Natural killer cell (primary cell): ENCODE measurements at regions of chr5 and their contacts with region 1.

Region 1: DNA sequence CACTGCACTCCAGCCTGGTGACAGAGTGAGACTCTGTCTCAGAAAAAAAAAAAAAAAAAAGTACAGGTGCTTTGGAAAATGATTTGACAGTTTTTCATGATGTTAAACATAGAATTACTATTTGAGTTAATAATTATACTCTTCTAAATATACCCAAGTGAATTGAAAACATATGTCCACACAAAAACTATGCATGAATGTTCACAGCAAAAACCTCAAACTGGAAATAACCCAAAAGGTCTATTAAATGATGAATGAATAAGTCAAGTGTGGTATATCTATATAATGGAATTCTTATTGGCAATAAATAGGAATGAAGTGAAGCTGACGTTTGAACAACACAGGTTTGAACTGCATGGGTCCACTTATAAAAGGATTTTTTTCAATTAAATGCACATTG is 207.2 kb upstream of the DAB2 start:
- DNase-seq: no peak
- ATAC-seq: no peak
- H3K4me3 ChIP-seq: no peak overlapping the region
- H3K4me3 Mint-ChIP-seq: no peak overlapping the region
- H3K27ac ChIP-seq: no peak overlapping the region
- H3K27ac Mint-ChIP-seq: no peak overlapping the region
- H3K4me1 ChIP-seq: no peaks in the 10 kb centered on the region
- H3K4me1 Mint-ChIP-seq: no peaks in the 10 kb centered on the region
- H3K27me3 ChIP-seq: no peaks in the 10 kb centered on the region
- H3K27me3 Mint-ChIP-seq: peaks cover 12 to 16% of the 10 kb centered on the region in 2 donors
- CTCF ChIP-seq: no peak

Region 2: DNA sequence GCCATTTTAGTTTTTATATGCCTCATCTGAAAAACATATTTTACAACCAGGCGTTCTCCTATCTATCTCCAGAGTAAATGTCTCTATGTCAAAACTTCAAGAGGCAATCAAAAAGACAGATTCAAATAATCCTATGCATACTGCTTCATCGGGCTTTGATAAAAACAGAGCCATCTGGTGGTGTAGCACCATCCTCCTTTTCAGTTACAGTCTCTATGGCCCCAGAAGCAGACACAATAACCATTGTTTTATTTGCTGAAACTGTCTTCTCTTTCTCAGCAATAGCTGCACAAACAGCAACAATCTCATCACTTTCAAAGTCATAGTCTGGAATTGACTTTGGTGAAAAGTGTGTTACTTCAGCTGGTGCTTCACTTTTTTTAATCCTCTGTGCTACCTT is 1084.0 kb after region 1 on chr5:
- intact Hi-C with region 1: loop called (anchors 5 kb)
- DNase-seq: peak in 1 of 2 donors; percentile 33
- ATAC-seq: no peak
- H3K4me3 ChIP-seq: no peak overlapping the region
- H3K4me3 Mint-ChIP-seq: no peak overlapping the region
- H3K27ac ChIP-seq: no peak overlapping the region
- H3K27ac Mint-ChIP-seq: no peak overlapping the region
- H3K4me1 ChIP-seq: no peaks in the 10 kb centered on the region
- H3K4me1 Mint-ChIP-seq: peaks cover 5 to 13% of the 10 kb centered on the region in 2 donors
- H3K27me3 ChIP-seq: no peaks in the 10 kb centered on the region
- H3K27me3 Mint-ChIP-seq: no peaks in the 10 kb centered on the region
- CTCF ChIP-seq: no peak